ENCODE measurements at regions of chr5 and their contacts with region 1.

Region 1: GRCh38 chr5:135534609-135535419 is 950 bp downstream of the NEUROG1 start:
- DNase-seq: no peak
- ATAC-seq: no peak
- H3K4me3 ChIP-seq: peak overlapping the region; percentile 54
- H3K27ac ChIP-seq: no peak overlapping the region
- H3K4me1 ChIP-seq: peaks cover 9% of the 10 kb centered on the region
- H3K27me3 ChIP-seq: peaks cover 6 to 81% (median 30%) of the 10 kb centered on the region in 3 donors
- CTCF ChIP-seq: no peak

Region 2: DNA sequence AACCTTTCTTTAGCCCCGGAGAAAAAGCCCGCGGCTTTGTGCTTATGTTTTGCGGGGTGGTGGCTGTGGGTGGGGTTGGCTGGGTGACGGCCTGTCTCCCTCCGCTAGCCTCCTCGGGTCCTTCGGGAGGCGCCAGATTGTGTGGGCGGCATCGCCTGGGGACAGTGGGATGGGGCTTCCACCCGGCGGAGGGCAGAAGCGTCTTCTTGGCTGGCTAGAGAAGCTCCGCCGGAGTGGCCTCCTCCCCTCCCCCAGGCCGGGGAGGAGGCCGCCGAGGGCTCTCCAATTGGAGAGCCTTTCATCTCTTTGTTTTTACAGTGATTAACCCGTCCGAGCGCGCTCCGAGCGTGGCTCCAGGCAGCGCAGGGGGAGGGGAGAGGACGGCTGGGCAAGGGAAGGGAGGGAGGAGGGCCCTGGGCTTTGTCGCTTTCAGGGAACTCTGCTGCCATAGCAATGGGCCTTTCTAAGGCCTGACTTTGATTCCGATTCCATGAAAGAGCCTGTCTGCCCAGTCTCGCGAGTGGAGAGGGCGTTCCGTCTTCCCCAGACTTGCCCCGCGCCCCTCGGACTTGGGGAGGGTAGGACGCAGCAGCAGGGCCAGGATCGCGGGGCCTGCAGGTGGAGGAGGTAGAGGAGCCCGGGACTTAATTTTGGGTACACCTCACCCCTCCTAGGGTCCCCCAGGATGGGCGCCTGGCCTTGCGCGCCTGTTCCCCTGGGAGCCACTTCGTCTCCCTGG is 45.9 kb before region 1 on chr5:
- intact Hi-C with region 1: loop called in 1 of 2 experiments (anchors 5 kb)
- DNase-seq: no peak
- ATAC-seq: peak in 3 of 4 donors; percentile 29 to 64 (median 35)
- H3K4me3 ChIP-seq: peak overlapping the region; percentile 54
- H3K27ac ChIP-seq: no peak overlapping the region
- H3K4me1 ChIP-seq: peaks cover 14% of the 10 kb centered on the region
- H3K27me3 ChIP-seq: peaks cover 3 to 78% (median 28%) of the 10 kb centered on the region in 3 donors
- CTCF ChIP-seq: no peak

Region 3: GRCh38 chr5:135591277-135591676 is 56.5 kb after region 1 on chr5:
- intact Hi-C with region 1: no loop called
- DNase-seq: no peak
- ATAC-seq: no peak
- H3K4me3 ChIP-seq: no peak overlapping the region
- H3K27ac ChIP-seq: no peak overlapping the region
- H3K4me1 ChIP-seq: no peaks in the 10 kb centered on the region
- H3K27me3 ChIP-seq: no peaks in the 10 kb centered on the region
- CTCF ChIP-seq: no peak

Measured in psoas muscle (tissue), 8 donors.